ENCODE measurements at regions of chr20 and their contacts with region 1.

Region 1: DNA sequence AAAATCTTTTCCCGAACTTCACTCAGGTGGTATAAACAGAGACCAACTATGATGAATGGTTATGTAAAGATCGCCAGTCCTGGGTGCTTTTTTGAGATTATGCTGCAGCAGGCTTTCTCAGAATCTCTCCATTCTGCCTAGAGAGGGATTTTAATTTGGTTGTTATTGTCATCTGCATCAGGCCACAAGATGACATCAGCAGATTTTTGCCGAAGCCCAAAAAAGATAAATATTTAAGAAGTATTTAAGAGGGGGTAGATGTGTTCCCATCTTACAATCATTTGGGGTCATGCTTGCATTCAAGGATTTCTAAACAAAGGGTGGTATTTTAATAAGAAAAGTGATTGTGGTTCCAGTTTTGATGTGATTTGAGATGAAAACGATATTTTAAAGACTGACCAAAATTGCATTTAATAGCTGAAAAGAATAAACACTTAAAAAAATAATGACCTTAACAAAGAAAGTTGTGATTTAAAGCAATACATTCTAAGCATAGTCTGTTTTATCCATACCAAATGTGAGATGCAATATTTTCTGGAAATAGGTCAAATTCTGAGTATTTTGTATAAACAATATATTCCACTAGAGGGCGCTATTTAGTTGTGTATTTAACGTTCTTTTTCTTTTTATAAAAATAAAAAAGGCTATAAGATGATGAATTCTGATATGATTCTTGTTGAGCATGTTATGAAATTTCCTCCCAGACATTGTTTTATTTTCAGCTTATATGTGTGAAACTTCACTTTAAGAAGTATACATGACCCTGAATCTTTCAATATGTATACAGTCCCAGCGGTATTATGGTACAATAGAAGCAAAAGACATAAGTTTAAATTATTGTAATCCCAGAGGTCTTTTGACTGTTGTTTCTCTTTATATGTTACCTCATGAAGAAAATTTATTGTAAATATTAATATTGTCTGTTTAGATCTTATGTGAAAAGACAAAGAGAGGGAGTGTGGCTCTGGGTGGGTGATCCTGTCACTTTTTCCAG is 51.0 kb upstream of the ZFP64 start:
- DNase-seq: no peak
- H3K4me3 ChIP-seq: no peak overlapping the region
- H3K27ac ChIP-seq: no peak overlapping the region
- H3K4me1 ChIP-seq: no peaks in the 10 kb centered on the region
- H3K27me3 ChIP-seq: peaks cover 36% of the 10 kb centered on the region; the same call in 1 of the 2 replicates
- CTCF ChIP-seq: peak; percentile 94

Region 2: DNA sequence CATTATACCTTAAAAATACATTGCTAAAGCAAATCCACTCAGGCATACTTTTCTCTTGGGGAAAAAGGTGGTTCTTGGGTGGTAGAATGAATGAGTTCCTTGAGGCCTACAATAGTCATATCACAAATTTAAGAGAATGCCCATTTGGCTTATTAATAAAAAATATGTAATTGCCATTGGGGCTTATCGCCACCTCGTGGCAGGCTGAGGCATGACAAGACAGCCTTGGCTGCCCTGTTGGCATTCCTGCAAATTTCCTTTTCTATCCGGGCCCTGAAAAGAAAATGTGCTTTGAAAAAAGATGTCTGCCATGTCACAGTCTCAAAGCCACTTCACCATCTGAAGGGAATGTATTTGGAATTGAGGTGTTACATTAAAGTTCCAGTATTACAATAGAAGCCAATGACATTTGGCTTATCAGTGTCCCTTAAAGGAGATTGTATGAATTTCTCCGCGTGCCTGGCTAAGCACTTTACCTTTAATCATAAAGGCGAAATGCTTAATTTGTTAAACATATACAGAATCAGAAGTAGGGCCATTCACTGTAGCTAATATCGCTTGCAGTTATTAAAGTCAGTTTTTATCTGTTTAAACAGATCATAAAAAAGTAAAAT is 137.3 kb after region 1 on chr20:
- CTCF ChIA-PET with region 1: no interaction called
- POLR2A ChIA-PET with region 1: no interaction called
- intact Hi-C with region 1: loop called (anchors 10 kb)
- DNase-seq: peak in 1 of 2 experiments; percentile 42
- H3K4me3 ChIP-seq: no peak overlapping the region
- H3K27ac ChIP-seq: no peak overlapping the region
- H3K4me1 ChIP-seq: no peaks in the 10 kb centered on the region
- H3K27me3 ChIP-seq: no peaks in the 10 kb centered on the region
- CTCF ChIP-seq: peak; percentile 98

Region 3: GRCh38 chr20:54093423-54094267 is 1851.1 kb after region 1 on chr20:
- CTCF ChIA-PET with region 1: interaction called, 12 read pairs
- POLR2A ChIA-PET with region 1: no interaction called
- intact Hi-C with region 1: no loop called
- DNase-seq: no peak
- H3K4me3 ChIP-seq: no peak overlapping the region
- H3K27ac ChIP-seq: no peak overlapping the region
- H3K4me1 ChIP-seq: peaks cover 8% of the 10 kb centered on the region; the same call in 1 of the 2 replicates
- H3K27me3 ChIP-seq: no peaks in the 10 kb centered on the region
- CTCF ChIP-seq: no peak

Region 4: DNA sequence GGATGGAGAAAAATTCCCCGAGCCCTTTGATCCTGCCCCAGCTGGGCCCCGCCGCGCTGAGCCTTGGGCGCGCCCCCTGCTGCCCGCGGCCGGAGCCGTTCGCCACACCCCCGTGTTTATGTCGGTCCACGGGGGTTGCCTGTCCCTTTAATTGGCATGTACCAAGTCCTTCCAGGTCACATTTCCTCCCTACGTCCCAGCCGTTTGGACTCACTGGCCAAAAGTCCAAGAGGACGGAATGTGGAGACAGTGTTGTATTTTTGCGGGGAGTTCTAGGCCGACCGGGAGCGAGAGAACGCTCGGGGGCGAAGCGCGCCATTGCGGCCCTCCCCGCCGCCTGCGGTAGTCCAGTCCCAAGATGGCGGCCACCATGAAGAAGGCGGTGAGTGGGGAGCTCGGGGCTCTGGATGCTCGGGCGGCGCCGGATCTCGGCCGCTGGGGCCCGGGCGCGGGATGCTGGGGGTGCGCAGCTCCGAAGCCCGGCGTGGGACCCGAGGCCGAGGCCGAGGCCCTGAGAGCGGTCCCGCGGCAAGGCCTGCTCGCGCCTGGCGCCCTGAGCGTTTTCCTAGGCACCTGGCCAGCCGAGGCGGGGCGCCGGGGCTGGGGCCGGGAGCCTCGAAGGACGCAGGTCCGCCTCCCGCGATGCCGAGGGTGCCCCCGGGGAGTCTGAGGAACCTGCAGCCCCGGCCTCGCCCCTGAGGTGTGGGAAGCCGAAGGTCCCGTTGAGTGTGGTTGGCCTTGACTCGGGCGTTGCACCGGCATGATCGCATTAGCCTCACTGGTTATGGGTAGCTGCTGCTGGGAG is 1965.4 kb after region 1 on chr20 and contains the start of gene PFDN4:
- CTCF ChIA-PET with region 1: no interaction called
- POLR2A ChIA-PET with region 1: no interaction called
- intact Hi-C with region 1: loop called (anchors 10 kb)
- DNase-seq: peak; percentile 73 to 92
- H3K4me3 ChIP-seq: peak within 1 kb of the TSS; percentile 73
- H3K27ac ChIP-seq: peak within 1 kb of the TSS; percentile 86
- H3K4me1 ChIP-seq: peaks cover 15% of the 10 kb centered on the region
- H3K27me3 ChIP-seq: no peaks in the 10 kb centered on the region
- CTCF ChIP-seq: peak; percentile 92
- total RNA-seq, gene PFDN4: 44.1 and 49.5 TPM in 2 replicates